Right lobe of liver (tissue), 6 donors: ENCODE measurements at regions of chr1 and their contacts with region 1.

Region 1: DNA sequence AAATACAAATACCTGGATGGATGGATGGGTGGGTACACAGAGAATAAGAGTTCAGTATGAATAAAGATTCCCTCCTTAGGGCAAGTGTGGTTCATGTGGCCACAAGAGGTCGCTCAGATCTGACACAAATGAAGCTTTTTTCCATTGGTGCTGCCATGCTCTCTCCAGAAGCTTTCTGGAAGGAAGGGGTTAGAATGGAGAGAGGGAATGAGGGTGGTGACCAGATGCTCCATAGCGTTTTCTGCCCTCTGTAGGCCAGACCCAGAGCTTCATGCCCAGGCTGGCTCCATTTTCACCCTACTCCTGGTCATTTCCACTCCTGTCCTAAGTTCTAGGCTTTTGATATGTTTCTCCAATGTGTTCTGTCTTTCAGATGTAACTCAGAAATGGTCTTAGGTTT is 3.3 kb upstream of the FCRL6 start:
- DNase-seq: peak; percentile 47 to 60 (median 53)
- ATAC-seq: peak; percentile 89 to 97 (median 94)
- H3K4me3 ChIP-seq: no peak overlapping the region
- H3K27ac ChIP-seq: no peak overlapping the region
- H3K4me1 ChIP-seq: no peaks in the 10 kb centered on the region
- H3K27me3 ChIP-seq: no peaks in the 10 kb centered on the region
- CTCF ChIP-seq: peak; percentile 74 to 84 (median 80)
- POLR2A ChIP-seq: no peak

Region 2: GRCh38 chr1:160018900-160019299 is 220.0 kb after region 1 on chr1:
- intact Hi-C with region 1: loop called in 1 of 2 experiments (anchors 10 kb)
- DNase-seq: no peak
- ATAC-seq: no peak
- H3K4me3 ChIP-seq: no peak overlapping the region
- H3K27ac ChIP-seq: no peak overlapping the region
- H3K4me1 ChIP-seq: no peaks in the 10 kb centered on the region
- H3K27me3 ChIP-seq: no peaks in the 10 kb centered on the region
- CTCF ChIP-seq: no peak
- POLR2A ChIP-seq: no peak